OCI-LY7 (cell line): ENCODE measurements at regions of chr22 and their contacts with region 1.

Region 1: DNA sequence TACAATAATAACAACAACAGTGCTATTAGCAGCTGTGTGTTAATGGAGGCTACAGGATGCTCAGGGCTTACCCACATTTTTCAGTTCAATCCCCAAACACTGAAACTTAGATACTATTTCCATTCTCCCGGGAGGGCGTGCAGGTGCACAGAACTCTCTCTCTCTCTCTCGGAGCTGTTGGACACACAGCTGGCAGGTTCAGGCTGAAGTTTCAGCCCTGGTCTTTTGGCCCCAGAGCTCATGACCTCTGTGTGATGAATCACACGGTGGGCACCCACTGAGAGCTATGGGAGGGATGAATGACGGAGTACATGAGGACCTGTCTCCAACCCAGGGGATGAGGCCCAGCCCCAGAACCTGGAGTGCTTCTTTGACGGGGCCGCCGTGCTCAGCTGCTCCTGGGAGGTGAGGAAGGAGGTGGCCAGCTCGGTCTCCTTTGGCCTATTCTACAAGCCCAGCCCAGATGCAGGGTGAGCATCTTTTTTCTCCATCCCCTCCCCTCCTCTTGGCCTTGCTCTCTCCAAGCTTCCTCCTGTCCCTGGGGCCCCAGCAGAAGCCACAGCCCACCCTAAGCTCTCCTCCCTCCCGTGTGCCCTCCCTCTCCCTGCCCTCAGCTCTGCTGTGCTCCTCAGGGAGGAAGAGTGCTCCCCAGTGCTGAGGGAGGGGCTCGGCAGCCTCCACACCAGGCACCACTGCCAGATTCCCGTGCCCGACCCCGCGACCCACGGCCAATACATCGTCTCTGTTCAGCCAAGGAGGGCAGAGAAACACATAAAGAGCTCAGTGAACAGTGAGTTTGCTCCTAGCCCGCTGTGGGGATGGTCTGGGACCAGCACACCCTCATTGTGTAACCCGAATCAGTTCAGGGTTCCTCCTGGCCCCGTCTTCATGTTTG is 16.9 kb downstream of the CSF2RB start:
- DNase-seq: no peak
- H3K4me3 ChIP-seq: no peak overlapping the region
- H3K27ac ChIP-seq: no peak overlapping the region
- H3K4me1 ChIP-seq: no peaks in the 10 kb centered on the region
- CTCF ChIP-seq: no peak

Region 2: GRCh38 chr22:36569999-36570398 is 360.3 kb before region 1 on chr22:
- CTCF ChIA-PET with region 1: no interaction called
- POLR2A ChIA-PET with region 1: no interaction called
- intact Hi-C with region 1: no loop called
- DNase-seq: no peak
- H3K4me3 ChIP-seq: no peak overlapping the region
- H3K27ac ChIP-seq: no peak overlapping the region
- H3K4me1 ChIP-seq: no peaks in the 10 kb centered on the region
- CTCF ChIP-seq: no peak

Region 3: GRCh38 chr22:36971341-36972125 is 41.2 kb after region 1 on chr22:
- CTCF ChIA-PET with region 1: no interaction called
- POLR2A ChIA-PET with region 1: no interaction called
- intact Hi-C with region 1: no loop called
- DNase-seq: no peak
- H3K4me3 ChIP-seq: no peak overlapping the region
- H3K27ac ChIP-seq: no peak overlapping the region
- H3K4me1 ChIP-seq: no peaks in the 10 kb centered on the region
- CTCF ChIP-seq: no peak

Region 4: GRCh38 chr22:37254209-37254866 is 324.1 kb after region 1 on chr22:
- CTCF ChIA-PET with region 1: no interaction called
- POLR2A ChIA-PET with region 1: interaction called, 10 read pairs
- intact Hi-C with region 1: no loop called
- DNase-seq: no peak
- H3K4me3 ChIP-seq: no peak overlapping the region
- H3K27ac ChIP-seq: no peak overlapping the region
- H3K4me1 ChIP-seq: peaks cover 32% of the 10 kb centered on the region
- CTCF ChIP-seq: no peak

Region 5: DNA sequence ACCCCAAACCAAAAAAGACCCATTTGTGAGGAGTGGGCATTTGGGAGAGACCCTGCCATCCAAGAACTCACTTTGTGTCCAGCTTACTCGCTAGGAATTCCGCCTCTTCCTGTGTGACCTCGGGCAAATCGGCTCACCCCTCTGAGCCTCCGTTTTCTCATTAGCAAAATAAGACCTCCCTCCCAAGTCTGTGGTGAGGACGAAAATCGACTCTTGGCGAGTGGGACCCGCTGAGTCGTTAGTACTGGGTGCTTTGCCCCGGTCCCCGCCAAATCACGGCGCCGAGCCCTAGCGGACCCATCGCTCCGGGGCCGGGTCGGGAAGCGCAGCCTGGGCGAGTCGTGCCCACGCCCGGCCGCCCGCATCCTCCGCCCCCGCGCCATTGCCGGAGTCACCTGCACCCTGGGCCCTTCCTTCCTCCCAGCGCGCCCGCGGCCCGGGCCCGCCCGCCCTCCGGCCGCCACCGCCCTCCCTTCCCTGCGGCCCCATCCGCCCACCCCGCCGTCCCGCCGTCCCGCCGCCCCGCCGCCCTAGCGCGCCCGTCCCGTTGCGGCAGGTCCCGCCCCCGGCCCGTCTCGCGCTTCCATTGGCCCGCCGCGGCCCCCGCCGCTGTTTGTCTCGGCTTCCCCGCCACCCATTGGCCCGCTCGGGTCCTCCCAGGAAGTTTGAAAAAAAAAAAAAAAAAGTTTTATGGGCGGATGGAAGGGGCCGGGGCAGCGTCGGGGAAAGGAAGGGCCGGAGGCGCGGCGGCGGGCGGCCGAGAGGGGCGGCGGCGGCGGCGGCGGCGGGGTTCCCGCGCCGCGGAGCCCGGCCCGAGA is 815.5 kb after region 1 on chr22:
- CTCF ChIA-PET with region 1: no interaction called
- POLR2A ChIA-PET with region 1: no interaction called
- intact Hi-C with region 1: no loop called
- DNase-seq: peak; percentile 93
- H3K4me3 ChIP-seq: peak overlapping the region; percentile 100
- H3K27ac ChIP-seq: peak overlapping the region; percentile 66
- H3K4me1 ChIP-seq: peaks cover 16% of the 10 kb centered on the region
- CTCF ChIP-seq: no peak